Psoas muscle (tissue), 8 donors: ENCODE measurements at regions of chr6 and their contacts with region 1.

Region 1: DNA sequence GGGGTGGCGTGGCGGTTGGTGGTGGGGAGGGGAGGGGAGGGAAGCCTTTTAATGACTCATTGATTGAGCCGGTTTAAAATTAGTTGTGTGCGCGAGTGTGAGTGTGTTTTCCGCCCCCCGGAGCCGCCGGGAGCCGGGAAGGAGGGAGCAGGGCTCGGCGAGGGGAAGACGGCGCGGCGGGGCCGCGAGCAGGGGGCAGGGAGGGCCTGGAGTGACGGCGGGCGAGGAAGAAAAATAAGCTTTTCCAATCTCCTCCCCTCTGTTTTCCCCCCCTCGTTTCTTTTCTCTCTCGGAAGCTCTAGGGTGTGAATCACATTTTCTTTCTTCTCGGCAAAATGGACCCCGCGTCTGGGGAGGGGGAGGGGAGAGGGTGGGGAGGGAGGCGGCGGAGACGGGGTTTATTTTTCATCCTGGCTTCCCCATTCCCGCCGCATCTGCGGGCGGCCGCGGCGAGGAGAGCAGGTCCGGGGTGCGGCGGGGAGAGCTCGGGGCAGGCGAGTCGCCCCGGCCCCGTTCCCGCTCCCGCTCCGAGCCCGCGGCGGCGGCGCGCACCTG is 847 bp downstream of the BICRAL start:
- DNase-seq: peak; percentile 80 to 92
- ATAC-seq: peak; percentile 74 to 77 (median 76)
- H3K4me3 ChIP-seq: peak overlapping the region; percentile 90
- H3K27ac ChIP-seq: peak overlapping the region; percentile 100
- H3K4me1 ChIP-seq: peaks cover 24% of the 10 kb centered on the region
- H3K27me3 ChIP-seq: no peaks in the 10 kb centered on the region
- CTCF ChIP-seq: no peak

Region 2: DNA sequence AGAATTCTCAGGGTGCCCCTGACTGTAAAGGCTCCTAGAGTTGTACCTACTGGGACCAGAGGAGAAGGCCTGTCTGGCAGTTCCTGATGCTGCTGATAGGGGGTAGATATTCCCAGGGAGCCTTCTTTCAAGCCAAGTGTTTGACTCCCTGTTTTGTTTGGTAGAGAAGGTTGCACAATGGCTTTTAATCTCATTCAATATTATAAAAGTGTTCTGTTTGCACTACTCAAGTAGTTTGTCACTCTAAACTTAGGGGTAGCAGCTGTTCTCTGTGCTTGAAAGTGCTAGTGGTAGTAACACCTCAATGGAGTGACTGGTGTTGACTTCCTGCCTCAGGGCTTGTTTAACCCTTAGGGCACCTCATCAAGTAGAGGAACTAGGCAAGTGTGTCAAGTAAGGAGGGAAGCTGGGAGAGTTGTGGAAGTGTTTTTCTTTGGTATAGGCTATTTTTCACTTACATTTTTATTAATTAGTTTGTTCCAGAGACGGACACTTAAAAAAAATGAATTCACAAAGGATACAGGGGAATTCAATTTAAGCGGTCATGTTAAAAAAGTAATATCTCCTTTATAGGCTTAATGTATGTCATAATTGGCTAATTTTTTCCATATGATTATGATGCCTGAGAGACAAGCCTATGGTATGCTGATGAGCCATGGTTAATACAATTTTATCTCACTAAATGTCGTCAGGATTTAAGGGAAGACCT is 37.3 kb after region 1 on chr6:
- intact Hi-C with region 1: loop called (anchors 5 kb)
- DNase-seq: no peak
- ATAC-seq: peak; percentile 60 to 75 (median 72)
- H3K4me3 ChIP-seq: no peak overlapping the region
- H3K27ac ChIP-seq: peak overlapping the region; percentile 79
- H3K4me1 ChIP-seq: peaks cover 39% of the 10 kb centered on the region
- H3K27me3 ChIP-seq: no peaks in the 10 kb centered on the region
- CTCF ChIP-seq: peak; percentile 35